A673 (cell line): ENCODE measurements at regions of chr1 and their contacts with region 1.

Region 1: DNA sequence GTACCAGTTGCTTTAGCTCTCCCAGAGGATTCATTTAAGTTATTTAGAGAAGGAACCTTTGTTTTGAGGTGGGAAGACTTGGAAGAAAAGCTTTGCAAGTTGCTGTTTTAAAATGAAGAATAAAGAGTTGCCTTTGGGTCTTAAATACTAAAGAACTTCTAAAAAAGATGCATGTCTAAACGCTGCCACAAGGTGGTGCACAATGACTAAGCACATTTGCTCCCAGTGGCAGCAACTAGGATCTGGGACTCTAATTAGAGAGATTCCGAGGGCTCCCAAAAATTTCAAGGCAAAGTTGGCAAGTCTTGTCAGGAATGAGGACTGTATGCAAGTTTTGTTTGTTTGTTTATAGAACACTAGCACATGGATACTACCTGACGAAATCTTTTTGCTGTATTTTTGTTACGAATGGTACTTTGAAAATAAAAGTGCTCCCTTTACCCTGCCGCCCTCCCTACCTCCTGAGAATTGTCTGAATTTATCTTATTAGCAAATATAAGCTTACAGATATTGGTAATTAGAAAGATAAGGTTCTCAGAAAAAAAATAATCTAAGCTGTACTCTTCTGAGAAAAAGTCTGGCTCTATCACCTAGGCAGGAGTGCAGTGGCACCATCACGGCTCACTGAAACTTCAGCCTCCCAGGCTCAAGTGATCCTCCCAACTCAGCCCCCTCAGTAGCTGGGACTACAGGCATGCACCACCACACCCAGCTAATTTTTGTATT is 121.8 kb downstream of the HFM1 start:
- DNase-seq: peak; percentile 83
- H3K4me3 ChIP-seq: no peak overlapping the region
- H3K27ac ChIP-seq: no peak overlapping the region
- H3K4me1 ChIP-seq: no peaks in the 10 kb centered on the region
- H3K27me3 ChIP-seq: no peaks in the 10 kb centered on the region
- CTCF ChIP-seq: peak; percentile 84

Region 2: DNA sequence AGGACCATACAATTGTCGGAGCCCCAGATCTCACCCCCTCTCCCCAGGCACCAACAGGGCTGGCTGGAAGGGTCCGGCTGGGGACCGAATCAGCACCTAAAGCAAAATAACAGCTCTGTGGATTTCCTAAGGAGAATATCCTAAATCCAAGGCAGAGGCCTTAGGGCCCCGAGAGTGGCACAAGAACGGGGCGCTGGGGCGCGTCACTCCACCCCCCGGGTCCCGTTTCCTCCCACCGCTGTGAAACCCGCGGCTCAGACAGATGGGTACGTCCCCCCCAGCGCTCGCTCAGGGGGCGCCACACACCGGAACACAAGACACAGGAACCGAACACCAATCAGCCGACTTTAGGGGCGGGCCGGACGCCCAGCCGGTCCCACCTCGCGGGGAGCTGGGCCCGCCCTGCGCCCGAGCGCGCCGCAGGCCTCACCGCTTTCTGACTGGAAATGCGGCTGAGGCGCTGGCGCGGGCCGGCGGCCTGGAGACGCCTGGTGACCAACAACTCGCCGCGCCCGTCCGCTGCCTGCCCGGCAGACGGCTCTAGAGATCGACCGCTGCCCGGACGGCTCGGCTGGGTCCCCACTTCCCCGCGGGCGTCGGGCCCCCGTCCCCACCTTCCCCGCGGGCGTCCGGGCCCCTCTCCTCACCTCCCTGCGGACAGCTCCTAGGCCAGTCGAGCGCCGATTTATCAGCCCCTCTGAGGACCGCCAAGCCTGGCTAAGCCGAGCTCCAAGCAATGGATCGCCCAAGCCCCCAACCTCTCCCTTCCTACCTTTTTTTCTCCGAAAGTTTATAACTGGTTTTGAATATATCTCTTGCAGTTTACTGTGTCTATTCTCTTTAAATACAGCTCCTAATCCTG is 121.5 kb after region 1 on chr1 and contains the start of gene HFM1:
- CTCF ChIA-PET with region 1: no interaction called
- POLR2A ChIA-PET with region 1: no interaction called
- intact Hi-C with region 1: loop called (anchors 1 kb)
- DNase-seq: peak; percentile 88
- H3K4me3 ChIP-seq: peak within 1 kb of the TSS; percentile 60
- H3K27ac ChIP-seq: peak within 1 kb of the TSS; percentile 68
- H3K4me1 ChIP-seq: peaks cover 10% of the 10 kb centered on the region
- H3K27me3 ChIP-seq: no peaks in the 10 kb centered on the region
- CTCF ChIP-seq: no peak
- total RNA-seq, gene HFM1: 0.69 and 1.3 TPM in 2 replicates

Region 3: DNA sequence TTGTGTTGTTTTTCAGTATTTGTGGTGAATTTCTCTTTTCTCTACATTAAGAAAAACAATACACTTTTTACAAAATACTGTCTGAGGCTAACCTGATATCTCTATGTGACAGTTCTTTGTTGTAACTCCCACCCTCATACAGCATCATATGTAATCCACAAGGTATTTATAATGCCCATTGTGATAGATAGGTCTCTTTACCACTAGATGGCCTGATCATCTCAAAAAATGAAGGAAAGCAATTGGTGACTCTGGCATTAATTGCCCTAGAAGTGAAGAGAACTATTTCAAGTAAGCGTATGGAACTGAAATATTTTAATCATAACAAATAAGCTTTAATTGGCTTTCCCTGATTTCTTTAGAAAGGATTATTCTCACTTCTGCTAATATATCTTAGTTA is 158.0 kb after region 1 on chr1:
- CTCF ChIA-PET with region 1: no interaction called
- POLR2A ChIA-PET with region 1: no interaction called
- intact Hi-C with region 1: no loop called
- DNase-seq: peak; percentile 40
- H3K4me3 ChIP-seq: no peak overlapping the region
- H3K27ac ChIP-seq: no peak overlapping the region
- H3K4me1 ChIP-seq: no peaks in the 10 kb centered on the region
- H3K27me3 ChIP-seq: no peaks in the 10 kb centered on the region
- CTCF ChIP-seq: peak; percentile 58

Region 4: DNA sequence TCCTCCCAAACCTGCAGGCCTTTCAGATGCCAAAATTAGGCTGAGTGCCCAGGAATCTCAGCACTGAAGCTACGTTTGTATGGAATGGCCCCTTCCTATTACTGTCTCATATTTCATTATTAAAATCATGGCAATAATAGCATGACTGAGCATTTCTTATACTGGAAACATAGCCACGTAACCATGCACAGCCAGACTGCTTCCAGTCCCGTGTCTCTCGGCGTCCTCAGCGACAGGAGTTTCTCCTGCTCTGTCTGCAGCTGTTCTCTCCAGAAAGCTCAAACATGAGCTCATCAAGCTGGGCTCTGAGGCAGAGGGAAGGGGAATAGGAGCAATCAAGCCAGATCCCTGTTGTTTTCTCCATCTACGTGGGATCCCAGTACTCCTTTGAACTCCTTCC is 321.8 kb after region 1 on chr1:
- CTCF ChIA-PET with region 1: no interaction called
- POLR2A ChIA-PET with region 1: no interaction called
- intact Hi-C with region 1: no loop called
- DNase-seq: no peak
- H3K4me3 ChIP-seq: no peak overlapping the region
- H3K27ac ChIP-seq: no peak overlapping the region
- H3K4me1 ChIP-seq: no peaks in the 10 kb centered on the region
- H3K27me3 ChIP-seq: no peaks in the 10 kb centered on the region
- CTCF ChIP-seq: no peak